Activated B cell treated with CpG ODN at 0.5 μM for 24 hours (primary cell): ENCODE measurements at regions of chr10 and their contacts with region 1.

Region 1: DNA sequence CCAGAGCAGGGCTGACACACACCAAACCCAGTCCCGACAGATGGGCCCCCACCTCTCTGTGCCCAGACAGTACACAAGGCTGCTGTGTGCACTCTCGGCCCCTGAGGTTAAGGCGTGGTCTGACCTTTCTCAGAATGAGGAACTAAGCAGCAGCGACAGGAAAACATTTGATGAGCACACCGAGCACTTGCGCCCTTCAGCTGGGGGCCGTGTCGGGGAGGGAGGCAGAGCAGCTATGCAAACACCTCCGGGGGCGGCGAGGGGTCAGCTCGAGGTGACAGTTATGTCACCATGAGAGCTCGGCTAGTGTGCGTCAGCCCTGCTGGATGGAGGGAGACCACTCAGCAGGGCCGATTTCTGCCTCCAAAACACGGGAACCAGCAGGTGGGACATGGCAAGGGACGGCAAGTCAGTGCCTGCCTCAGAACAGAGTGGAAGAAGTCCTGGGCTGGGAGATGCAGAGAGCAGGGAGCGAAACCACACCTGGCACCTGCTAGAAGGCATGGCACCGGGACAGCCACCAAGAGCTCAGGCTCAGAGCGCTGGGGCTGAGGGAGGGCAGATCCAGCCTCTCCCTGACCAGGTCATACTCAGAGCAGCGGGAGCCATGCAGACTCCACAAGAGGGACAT is 57.4 kb downstream of the CHST15 start:
- DNase-seq: peak; percentile 75
- ATAC-seq: peak; percentile 93
- H3K4me3 Mint-ChIP-seq: peak overlapping the region; percentile 85
- H3K27ac Mint-ChIP-seq: peak overlapping the region; percentile 95
- H3K4me1 Mint-ChIP-seq: peaks cover 26% of the 10 kb centered on the region
- H3K27me3 Mint-ChIP-seq: no peaks in the 10 kb centered on the region
- CTCF ChIP-seq: no peak

Region 2: DNA sequence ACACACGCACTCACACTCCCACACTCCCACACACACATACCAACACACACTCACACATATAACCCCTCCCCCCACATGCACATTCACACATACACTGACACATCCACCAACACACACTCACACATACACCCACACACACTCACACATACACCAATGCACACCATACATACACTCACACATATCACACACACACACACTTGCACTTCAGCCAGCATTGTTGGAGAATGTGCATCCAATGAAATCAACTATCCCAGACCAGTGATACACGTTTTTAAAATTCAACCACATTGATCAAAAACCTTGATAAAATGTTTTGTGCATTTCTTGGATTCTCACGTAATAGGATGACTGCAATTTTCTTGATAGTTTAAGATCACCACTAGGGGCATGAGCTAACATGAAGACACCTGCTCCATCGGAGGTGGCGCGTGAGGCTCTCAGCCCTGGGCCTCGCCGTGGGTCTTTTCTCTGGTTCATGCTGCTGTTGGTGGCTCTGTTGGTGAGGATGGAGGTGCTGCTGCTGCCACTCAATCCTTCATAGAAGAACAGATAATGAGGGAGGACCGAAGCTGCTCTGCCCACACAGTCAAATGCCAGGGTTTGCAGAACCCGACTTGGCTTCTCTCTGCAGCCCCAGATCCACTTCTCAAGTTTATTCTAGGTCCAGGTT is 89.5 kb after region 1 on chr10:
- CTCF ChIA-PET with region 1: interaction called, 3 read pairs
- POLR2A ChIA-PET with region 1: interaction called, 6 read pairs
- intact Hi-C with region 1: loop called (anchors 1 kb)
- DNase-seq: no peak
- ATAC-seq: peak; percentile 23
- H3K4me3 Mint-ChIP-seq: no peak overlapping the region
- H3K27ac Mint-ChIP-seq: no peak overlapping the region
- H3K4me1 Mint-ChIP-seq: peaks cover 3% of the 10 kb centered on the region
- H3K27me3 Mint-ChIP-seq: no peaks in the 10 kb centered on the region
- CTCF ChIP-seq: no peak

Region 3: DNA sequence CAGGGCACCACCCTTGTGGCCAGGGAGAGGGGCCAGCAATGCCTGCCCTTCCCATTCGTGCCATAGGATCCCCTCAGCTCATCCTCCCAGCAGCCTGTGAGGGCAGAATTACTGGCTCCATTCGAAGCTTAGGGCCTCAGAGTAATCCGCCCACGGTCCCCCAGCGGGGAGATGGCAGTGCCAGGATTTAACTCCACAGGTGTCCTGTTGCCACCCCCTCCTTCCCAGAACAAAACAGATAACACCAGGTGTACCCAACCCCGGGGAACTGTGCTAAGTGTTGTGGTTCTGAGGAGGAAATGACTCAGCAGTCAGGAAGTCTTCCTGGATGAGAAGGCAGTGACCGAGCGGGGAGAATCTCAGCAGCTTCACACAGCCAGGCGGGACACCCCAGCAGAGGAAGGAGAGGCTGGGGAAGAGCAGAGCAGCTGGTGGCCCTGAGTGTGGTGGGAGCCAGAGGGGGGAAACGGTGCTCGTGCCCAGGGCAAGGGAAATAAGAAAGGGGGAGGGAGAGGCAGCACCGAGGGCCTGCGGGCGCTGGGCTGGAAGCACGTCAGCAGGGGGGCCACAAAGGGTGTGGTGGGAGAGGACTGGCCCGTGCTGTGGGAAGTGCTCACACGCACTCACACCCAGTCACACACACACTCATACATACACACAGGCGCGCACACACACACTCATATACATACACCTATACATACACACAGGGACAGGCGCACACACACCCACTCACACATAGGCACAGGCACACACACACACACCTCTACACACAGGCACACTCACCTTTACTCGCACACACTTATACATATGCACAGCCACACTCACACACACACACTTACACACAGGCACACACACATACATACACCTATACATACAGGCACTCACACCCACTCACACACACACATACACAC is 117.1 kb after region 1 on chr10:
- CTCF ChIA-PET with region 1: no interaction called
- POLR2A ChIA-PET with region 1: no interaction called
- intact Hi-C with region 1: loop called (anchors 2 kb)
- DNase-seq: peak; percentile 28
- ATAC-seq: peak; percentile 68
- H3K4me3 Mint-ChIP-seq: no peak overlapping the region
- H3K27ac Mint-ChIP-seq: no peak overlapping the region
- H3K4me1 Mint-ChIP-seq: peaks cover 16% of the 10 kb centered on the region
- H3K27me3 Mint-ChIP-seq: no peaks in the 10 kb centered on the region
- CTCF ChIP-seq: no peak

Region 4: DNA sequence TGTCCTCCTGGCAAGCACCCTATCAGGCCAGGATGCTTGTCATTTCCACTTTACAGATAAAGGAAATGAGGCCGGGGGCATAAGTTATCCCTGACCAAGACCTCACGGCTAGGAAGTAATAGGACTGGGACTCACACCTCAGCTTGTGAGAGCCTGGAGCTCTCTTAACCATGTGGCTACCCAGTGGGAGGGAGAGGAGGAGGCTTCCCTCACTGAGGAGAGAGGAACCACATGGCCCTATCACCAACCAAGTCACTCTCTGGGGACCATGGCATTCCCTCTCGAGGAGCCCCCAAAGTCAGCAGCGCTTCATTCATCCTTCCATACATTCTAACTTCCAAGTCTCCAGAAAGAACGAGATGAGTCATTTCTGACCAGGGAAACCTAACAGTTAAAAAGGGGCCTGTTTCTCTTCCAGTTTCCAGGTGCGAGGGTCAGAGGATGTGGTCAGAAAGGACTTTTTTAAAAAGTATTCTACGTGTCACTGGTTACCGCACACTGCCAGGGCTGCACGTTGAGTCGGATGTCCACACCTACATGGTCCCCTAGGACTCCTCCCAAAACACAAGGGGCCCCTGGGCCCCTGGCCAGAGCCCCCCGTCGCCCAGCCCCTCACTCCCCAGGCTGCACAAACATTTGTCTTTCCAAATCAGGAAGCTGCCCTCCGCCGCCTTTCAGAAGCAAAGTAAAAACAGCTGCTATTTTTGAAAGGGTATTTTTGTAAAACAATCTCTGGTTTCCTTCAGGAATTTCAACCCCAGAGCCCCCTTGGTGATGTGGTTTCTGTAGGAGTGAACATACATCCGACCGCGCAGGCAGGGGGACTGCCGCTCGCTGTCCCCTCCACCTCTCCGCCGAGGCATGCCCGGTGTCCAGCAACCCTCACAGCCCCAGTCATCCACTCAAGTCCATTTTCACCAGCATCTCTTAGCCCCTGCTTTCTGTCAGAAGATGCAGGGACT is 185.6 kb after region 1 on chr10:
- CTCF ChIA-PET with region 1: interaction called, 5 read pairs
- POLR2A ChIA-PET with region 1: interaction called, 6 read pairs
- intact Hi-C with region 1: loop called (anchors 1 kb)
- DNase-seq: no peak
- ATAC-seq: peak; percentile 16
- H3K4me3 Mint-ChIP-seq: peak overlapping the region; percentile 74
- H3K27ac Mint-ChIP-seq: no peak overlapping the region
- H3K4me1 Mint-ChIP-seq: peaks cover 33% of the 10 kb centered on the region
- H3K27me3 Mint-ChIP-seq: no peaks in the 10 kb centered on the region
- CTCF ChIP-seq: no peak

Region 5: DNA sequence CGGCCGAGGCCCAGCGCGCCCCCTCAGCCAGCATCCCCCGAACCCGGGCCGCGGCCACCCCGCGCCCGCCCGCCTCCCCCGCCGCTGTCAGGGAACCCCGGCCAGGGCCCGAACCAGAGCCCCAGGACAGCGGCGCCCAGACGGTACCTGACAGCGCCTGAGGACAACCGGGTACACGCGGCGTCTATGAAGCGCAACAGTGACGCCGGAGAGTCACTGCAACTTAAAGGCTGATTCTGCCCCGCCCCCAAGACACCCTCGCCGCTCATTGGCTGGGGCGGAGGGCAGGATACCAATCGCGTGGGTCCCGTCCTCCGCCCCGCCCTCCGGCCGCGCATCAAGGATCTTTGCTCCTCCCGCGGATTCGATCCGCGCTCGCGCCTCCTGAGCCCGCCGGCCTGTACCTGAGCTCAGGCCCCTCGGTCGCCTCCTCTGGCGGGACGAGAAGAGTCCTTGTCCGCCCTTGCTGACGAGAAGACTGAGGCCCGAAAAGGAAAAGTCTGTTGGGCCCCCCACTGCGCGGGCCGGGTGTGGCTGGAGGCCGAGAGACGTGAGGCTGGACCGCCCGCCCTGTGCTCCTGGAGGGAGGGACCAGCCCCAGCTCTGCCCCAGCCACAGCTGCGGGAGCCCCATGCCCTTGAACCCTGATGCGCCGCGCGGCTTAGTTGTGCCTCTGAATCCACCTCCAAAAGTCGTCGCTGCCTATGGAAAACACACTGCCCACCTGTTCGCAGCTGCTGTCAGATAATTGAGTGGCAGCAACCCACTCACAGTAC is 382.9 kb after region 1 on chr10 and contains the start of gene OAT:
- CTCF ChIA-PET with region 1: no interaction called
- POLR2A ChIA-PET with region 1: no interaction called
- intact Hi-C with region 1: loop called (anchors 1 kb)
- DNase-seq: peak; percentile 92
- ATAC-seq: peak; percentile 97
- H3K4me3 Mint-ChIP-seq: peak within 1 kb of the TSS; percentile 82
- H3K27ac Mint-ChIP-seq: peak within 1 kb of the TSS; percentile 46
- H3K4me1 Mint-ChIP-seq: peaks cover 12% of the 10 kb centered on the region
- H3K27me3 Mint-ChIP-seq: peaks cover 19% of the 10 kb centered on the region
- CTCF ChIP-seq: no peak
- total RNA-seq, gene OAT: 19.6 and 20.1 TPM in 2 replicates

Region 6: DNA sequence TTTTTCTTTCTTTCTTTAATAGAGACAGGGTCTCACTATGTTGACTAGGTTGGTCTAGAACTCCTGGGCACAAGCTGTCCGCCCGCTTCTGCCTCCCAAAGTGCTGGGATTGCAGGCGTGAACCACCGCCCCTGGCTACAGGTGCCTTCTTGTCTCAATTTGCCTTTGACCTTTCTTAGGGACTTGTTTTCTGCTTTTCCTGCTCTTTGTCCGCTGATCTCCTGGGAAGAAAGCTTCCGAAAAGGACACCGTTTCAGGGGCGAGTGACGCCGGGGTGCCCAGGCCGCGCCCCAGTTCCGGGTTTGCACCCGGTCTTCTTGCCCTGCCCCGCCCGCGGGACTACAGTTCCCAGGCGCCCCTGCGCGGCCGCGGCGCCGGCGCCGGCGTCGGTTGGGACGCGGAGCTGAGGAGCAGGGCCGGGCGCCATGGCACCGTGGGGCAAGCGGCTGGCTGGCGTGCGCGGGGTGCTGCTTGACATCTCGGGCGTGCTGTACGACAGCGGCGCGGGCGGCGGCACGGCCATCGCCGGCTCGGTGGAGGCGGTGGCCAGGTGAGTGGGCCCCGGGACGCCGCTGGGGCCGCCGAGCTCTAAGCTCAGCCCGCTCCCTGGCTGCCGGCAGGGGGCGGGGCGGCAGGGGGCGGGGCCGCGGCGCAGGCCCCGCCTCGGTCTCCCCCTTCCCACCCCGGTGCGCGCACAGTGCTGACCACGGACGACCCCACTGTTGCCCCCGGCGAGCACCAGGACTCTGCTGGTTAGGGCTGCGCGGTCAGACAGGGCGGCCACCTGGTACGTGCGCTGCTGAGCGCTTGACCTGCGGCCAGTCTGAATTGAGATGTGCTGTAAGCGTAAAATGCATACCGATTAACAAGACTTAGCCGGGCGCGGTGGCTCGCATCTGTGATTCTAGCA is 425.6 kb after region 1 on chr10 and contains the start of gene LHPP:
- CTCF ChIA-PET with region 1: no interaction called
- POLR2A ChIA-PET with region 1: no interaction called
- intact Hi-C with region 1: loop called (anchors 5 kb)
- DNase-seq: peak; percentile 91
- ATAC-seq: peak; percentile 92
- H3K4me3 Mint-ChIP-seq: peak within 1 kb of the TSS; percentile 92
- H3K27ac Mint-ChIP-seq: peak within 1 kb of the TSS; percentile 95
- H3K4me1 Mint-ChIP-seq: peaks cover 32% of the 10 kb centered on the region
- H3K27me3 Mint-ChIP-seq: peaks cover 4% of the 10 kb centered on the region
- CTCF ChIP-seq: no peak
- total RNA-seq, gene LHPP: 21.0 and 22.9 TPM in 2 replicates

Region 7: GRCh38 chr10:124849111-124849773 is 813.2 kb after region 1 on chr10:
- CTCF ChIA-PET with region 1: no interaction called
- POLR2A ChIA-PET with region 1: no interaction called
- intact Hi-C with region 1: no loop called
- DNase-seq: no peak
- ATAC-seq: no peak
- H3K4me3 Mint-ChIP-seq: no peak overlapping the region
- H3K27ac Mint-ChIP-seq: no peak overlapping the region
- H3K4me1 Mint-ChIP-seq: no peaks in the 10 kb centered on the region
- H3K27me3 Mint-ChIP-seq: no peaks in the 10 kb centered on the region
- CTCF ChIP-seq: no peak